ENCODE measurements at regions of chr11 and their contacts with region 1.

Region 1: DNA sequence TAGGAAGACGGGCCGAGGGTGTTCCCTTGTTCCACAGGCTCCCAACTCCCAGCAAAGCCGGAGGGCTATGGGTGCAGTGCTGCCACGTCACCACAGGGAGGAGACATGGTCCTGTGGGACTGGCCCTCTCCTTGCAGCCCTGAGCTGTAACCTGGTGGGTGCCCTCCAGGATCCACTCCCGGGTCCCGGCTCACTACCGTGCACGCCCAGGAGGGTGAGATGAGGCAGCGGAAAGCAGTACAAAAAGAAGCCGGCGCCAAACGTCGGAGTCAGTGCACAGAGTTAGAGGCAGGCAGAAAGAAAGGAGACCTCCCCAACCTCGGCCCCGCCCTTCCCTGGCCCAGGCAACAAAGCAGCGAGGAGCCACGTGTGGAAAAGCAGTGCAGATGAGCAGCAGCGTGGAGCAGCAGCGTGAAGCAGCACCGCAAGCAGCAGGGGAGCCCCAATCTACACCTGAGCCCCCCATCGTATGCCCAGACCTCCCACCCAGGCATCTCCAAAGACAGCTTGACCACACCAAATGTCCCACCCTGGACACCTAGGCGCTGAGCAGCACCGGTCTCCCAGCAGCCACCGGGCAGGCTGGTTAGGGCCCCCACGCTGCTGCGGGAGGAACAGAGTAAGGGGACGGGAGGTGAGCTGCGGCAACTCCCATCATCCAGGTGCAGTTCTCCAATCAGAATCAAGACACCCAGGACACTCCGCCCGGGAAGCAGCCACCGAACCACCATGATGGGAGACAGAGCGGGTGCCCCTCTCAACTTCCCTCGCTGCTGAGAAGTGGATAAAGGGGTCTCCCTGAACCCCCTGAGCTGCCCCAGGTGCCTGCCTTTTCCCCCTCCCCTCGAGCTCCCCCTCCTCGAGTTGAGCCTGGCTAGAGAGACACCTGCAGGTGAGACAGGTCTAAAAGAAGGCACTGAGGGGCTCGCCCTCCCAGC is 28.8 kb downstream of the IGSF9B start:
- DNase-seq: peak; percentile 58 to 75 (median 72)
- ATAC-seq: peak; percentile 89
- H3K4me3 ChIP-seq: no peak overlapping the region
- H3K27ac ChIP-seq: no peak overlapping the region
- H3K4me1 ChIP-seq: peaks cover 0 to 17% of the 10 kb centered on the region in 2 experiments; a peak in 2 of 5 replicates
- H3K27me3 ChIP-seq: peaks cover 4 to 59% of the 10 kb centered on the region in 2 experiments; a peak in 3 of 5 replicates
- CTCF ChIP-seq: peak; percentile 66 to 85 (median 73)
- EP300 ChIP-seq: no peak
- POLR2A ChIP-seq: no peak
- RAD21 ChIP-seq: peak; percentile 55 to 79

Region 2: GRCh38 chr11:133742353-133742752 is 185.6 kb before region 1 on chr11:
- CTCF ChIA-PET with region 1: no interaction called
- POLR2A ChIA-PET with region 1: no interaction called
- in situ Hi-C with region 1: no loop called
- intact Hi-C with region 1: no loop called
- DNase-seq: no peak
- ATAC-seq: no peak
- H3K4me3 ChIP-seq: no peak overlapping the region
- H3K27ac ChIP-seq: no peak overlapping the region
- H3K4me1 ChIP-seq: no peaks in the 10 kb centered on the region
- H3K27me3 ChIP-seq: no peaks in the 10 kb centered on the region
- CTCF ChIP-seq: no peak
- EP300 ChIP-seq: no peak
- POLR2A ChIP-seq: no peak
- RAD21 ChIP-seq: no peak

Region 3: DNA sequence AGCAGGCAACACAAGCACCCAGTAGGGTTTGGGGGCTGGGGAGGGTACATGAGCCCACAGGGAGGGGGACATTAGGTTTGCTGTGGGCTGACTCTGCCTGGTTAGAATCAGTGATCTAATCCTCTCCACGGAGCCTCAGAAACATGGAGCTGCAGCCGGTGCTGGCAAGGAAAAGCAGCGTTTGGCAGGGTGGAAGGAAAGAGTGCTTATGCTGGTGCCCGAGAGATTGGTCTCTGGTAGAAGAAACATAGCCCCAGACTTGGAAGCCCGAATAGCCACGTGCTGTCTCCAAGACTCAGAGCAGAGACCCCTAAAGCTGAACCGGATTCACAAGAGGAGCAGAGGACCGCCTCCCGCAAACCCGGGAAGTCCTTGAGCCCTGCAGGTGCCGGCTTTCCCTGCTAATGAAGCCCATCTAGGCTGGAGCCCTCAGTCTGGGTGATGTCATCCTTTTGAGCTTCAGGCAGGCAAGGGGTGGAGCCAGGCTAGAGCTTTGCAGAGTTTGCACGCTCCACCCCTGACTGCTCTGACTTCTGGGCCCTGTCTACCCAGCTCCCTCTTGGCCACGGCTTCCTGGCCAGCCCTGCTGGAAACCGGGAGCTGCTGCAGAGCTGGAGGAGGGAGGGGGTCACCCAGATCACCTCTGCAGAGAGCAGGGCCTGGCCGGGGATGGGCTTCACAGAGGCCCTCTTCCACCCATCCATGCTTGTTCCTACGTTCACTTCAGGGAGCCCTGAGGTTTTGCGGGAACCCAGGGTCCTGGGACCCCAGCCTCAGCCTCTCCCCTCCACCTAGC is 105.9 kb after region 1 on chr11:
- CTCF ChIA-PET with region 1: no interaction called
- POLR2A ChIA-PET with region 1: no interaction called
- in situ Hi-C with region 1: no loop called
- intact Hi-C with region 1: loop called (anchors 10 kb)
- DNase-seq: peak; percentile 26 to 58 (median 41)
- ATAC-seq: peak; percentile 87
- H3K4me3 ChIP-seq: no peak overlapping the region
- H3K27ac ChIP-seq: no peak overlapping the region
- H3K4me1 ChIP-seq: peaks cover 0 to 10% of the 10 kb centered on the region in 2 experiments; a peak in 2 of 5 replicates
- H3K27me3 ChIP-seq: peaks cover 21 to 66% of the 10 kb centered on the region in 2 experiments
- CTCF ChIP-seq: no peak
- EP300 ChIP-seq: no peak
- POLR2A ChIP-seq: no peak
- RAD21 ChIP-seq: no peak

Region 4: DNA sequence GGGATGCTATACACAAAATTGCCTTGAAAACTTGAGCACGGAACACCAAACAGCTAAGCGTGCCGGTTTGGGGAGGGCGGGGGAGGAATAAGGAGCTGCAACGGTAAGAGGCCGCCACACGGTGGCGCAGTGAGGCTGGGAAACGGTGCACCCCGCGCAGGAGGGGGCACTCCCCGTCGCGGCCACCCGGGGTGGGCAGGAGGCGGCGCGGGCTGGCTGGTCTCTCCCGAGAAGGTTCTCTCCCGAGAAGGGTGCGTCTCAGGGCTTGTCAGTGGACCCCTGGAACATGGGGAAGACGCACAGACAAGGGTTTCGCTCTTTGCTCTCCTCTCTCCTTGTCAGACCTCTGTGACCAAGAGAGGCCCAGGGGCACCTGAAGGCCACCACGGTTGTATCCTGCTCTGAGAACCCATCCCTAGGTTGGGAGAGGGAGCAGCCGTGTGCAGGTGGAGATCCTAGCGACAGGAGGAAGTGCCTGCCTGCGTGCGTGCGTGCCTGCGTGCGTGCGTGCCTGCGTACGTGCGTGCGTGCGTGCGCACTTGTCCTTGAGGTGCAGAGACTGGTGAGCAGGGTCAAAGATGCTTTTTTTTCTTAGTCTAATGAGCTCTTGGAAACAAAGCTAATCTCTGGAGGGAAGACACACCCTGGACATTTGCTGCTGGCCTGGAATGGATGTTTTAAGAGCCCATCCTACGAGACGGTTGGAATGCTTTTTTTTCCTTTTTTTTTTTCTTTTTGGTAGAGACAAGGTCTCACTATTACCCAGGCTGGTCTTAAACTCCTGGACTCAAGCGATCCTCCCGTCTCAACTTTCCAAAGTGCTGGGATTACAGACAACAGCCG is 122.8 kb after region 1 on chr11:
- CTCF ChIA-PET with region 1: interaction called, 3 read pairs
- POLR2A ChIA-PET with region 1: no interaction called
- in situ Hi-C with region 1: no loop called
- intact Hi-C with region 1: loop called (anchors 5 kb)
- DNase-seq: peak; percentile 76 to 91 (median 90)
- ATAC-seq: peak; percentile 98
- H3K4me3 ChIP-seq: no peak overlapping the region
- H3K27ac ChIP-seq: no peak overlapping the region
- H3K4me1 ChIP-seq: peaks cover 0 to 10% of the 10 kb centered on the region in 2 experiments; a peak in 3 of 5 replicates
- H3K27me3 ChIP-seq: peaks cover 6 to 49% of the 10 kb centered on the region in 2 experiments
- CTCF ChIP-seq: peak; percentile 86 to 94 (median 89)
- EP300 ChIP-seq: no peak
- POLR2A ChIP-seq: no peak
- RAD21 ChIP-seq: peak; percentile 55 to 82

Region 5: GRCh38 chr11:134139873-134140331 is 211.9 kb after region 1 on chr11:
- CTCF ChIA-PET with region 1: interaction called, 4 read pairs
- POLR2A ChIA-PET with region 1: no interaction called
- in situ Hi-C with region 1: loop called (anchors 10 kb)
- intact Hi-C with region 1: loop called (anchors 2 kb)
- DNase-seq: peak; percentile 35 to 62 (median 44)
- ATAC-seq: peak; percentile 97
- H3K4me3 ChIP-seq: no peak overlapping the region
- H3K27ac ChIP-seq: no peak overlapping the region
- H3K4me1 ChIP-seq: no peaks in the 10 kb centered on the region
- H3K27me3 ChIP-seq: peaks cover 0 to 15% of the 10 kb centered on the region in 2 experiments; a peak in 3 of 5 replicates
- CTCF ChIP-seq: peak; percentile 60 to 77 (median 72)
- EP300 ChIP-seq: no peak
- POLR2A ChIP-seq: no peak
- RAD21 ChIP-seq: peak; percentile 63 to 70

Measured in K562 (cell line).